ENCODE measurements at regions of chr1 and their contacts with region 1.

Region 1: GRCh38 chr1:114757455-114758250 is at the start of gene CSDE1:
- DNase-seq: peak; percentile 93
- ATAC-seq: peak; percentile 91
- H3K4me3 ChIP-seq: peak within 1 kb of the TSS; percentile 96
- H3K27ac ChIP-seq: peak within 1 kb of the TSS; percentile 99
- H3K4me1 ChIP-seq: peaks cover 15% of the 10 kb centered on the region; the same call in 1 of the 2 replicates
- H3K27me3 ChIP-seq: no peaks in the 10 kb centered on the region
- CTCF ChIP-seq: peak; percentile 10 to 38 (median 28); a peak in 2 of 6 replicates
- EP300 ChIP-seq: peak in 1 of 2 experiments; percentile 11; a peak in 1 of 4 replicates
- POLR2A ChIP-seq: peak; percentile 98
- RAD21 ChIP-seq: peak; percentile 42
- polyA plus RNA-seq, gene CSDE1: 130 to 143 TPM

Region 2: DNA sequence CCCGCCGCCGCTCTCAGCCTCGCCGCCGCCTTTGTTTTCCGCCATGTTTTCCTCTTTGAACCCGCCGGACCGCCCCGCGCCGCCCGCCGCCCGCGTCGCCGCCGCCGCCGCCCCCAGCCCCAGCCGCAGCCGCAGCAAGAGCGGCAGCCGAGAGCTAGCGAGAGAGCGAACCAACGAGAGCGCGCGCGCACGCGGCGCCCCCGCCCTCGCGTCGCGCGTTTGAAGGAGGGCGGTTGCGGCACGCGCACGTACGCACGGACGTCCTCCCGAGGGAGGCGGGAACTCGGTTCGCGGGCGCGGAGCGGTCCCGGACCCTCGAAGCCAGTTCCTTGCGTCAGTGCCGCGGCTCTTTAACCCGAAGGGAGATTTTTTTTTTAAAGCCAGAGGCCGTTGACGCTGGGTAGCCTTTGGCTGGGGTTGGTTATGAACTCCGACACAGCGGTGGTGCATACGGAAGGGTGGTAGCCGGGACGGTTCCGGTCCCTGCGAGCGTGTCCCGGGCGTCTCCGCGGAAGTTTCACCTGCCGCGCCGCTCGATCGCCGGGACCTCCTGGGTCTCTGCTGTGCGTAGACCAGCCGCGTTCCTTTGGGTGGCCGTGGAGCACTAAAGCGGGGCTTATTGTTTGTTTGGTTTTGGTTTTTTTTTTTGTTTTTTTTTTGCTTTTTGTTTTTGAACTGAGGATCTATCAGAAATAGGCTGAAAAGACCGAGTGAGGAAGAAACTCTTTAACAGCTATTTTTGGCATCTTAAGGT is 246.4 kb before region 1 on chr1 and contains the start of gene TRIM33:
- CTCF ChIA-PET with region 1: no interaction called
- POLR2A ChIA-PET with region 1: interaction called, 3 read pairs
- RAD21 ChIA-PET with region 1: no interaction called
- SMC1A ChIA-PET with region 1: no interaction called
- in situ Hi-C with region 1: no loop called
- intact Hi-C with region 1: loop called (anchors 5 kb)
- DNase-seq: peak; percentile 81
- ATAC-seq: peak; percentile 72
- H3K4me3 ChIP-seq: peak within 1 kb of the TSS; percentile 93
- H3K27ac ChIP-seq: peak within 1 kb of the TSS; percentile 94
- H3K4me1 ChIP-seq: peaks cover 7% of the 10 kb centered on the region; the same call in 1 of the 2 replicates
- H3K27me3 ChIP-seq: no peaks in the 10 kb centered on the region
- CTCF ChIP-seq: no peak
- EP300 ChIP-seq: no peak; a peak in 1 of 4 replicates
- POLR2A ChIP-seq: peak; percentile 85
- RAD21 ChIP-seq: no peak
- polyA plus RNA-seq, gene TRIM33: 9.0 to 10.6 TPM

Region 3: GRCh38 chr1:114716304-114717170 is 41.1 kb before region 1 on chr1 and contains the start of gene NRAS:
- CTCF ChIA-PET with region 1: interaction called, 4 read pairs
- POLR2A ChIA-PET with region 1: interaction called, 36 read pairs
- RAD21 ChIA-PET with region 1: interaction called, 3 read pairs
- SMC1A ChIA-PET with region 1: interaction called, 24 read pairs
- in situ Hi-C with region 1: no loop called
- intact Hi-C with region 1: loop called (anchors 2 kb)
- DNase-seq: peak; percentile 56
- ATAC-seq: peak; percentile 96
- H3K4me3 ChIP-seq: peak within 1 kb of the TSS; percentile 93
- H3K27ac ChIP-seq: peak within 1 kb of the TSS; percentile 98
- H3K4me1 ChIP-seq: no peaks in the 10 kb centered on the region
- H3K27me3 ChIP-seq: no peaks in the 10 kb centered on the region
- CTCF ChIP-seq: no peak
- EP300 ChIP-seq: peak in 1 of 2 experiments; percentile 30; a peak in 1 of 4 replicates
- POLR2A ChIP-seq: peak; percentile 85
- RAD21 ChIP-seq: no peak
- polyA plus RNA-seq, gene NRAS: 31.7 to 33.0 TPM

Region 4: DNA sequence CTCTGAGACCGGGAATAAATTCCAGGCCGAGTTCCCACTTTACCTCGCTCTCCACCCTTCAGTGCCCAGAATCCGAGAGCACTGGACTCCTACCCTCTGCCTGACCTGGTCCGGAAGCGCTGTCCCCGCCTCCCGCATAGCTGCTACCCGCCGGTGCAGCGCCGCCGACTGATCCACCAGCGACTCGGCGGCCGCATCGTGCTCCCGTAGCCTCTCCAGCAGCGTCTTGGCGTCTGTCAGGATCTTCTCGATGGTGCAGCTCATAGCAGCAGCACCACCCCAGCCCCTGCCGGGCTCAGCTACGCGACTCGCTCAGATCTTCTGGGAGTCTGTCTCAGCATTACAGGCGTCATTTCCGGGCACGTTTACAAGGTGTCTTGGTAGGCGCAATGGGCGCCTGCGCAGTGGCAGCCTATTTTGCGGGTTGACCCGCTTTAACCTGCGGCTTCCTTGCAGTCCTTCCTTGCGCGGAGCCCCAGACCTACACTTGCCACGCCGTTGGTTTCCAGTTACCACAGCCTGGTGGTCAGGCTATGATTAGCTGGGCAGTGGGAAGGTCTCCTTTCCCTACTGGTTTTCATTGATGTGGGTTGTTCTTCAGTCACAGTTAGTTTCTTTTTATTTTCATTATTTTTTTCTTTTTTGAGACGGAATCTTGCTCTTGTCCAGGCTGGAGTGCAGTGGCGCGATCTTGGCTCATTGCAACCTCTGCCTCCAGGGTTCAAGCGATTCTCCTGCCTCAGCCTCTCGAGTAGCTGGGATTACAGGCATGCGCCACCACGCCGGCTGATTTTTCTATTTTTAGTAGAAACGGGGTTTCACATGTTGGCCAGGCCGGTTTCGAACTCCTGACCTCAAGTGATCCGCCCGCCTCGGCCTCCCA is 22.9 kb after region 1 on chr1 and contains the start of gene SIKE1:
- CTCF ChIA-PET with region 1: interaction called, 3 read pairs
- POLR2A ChIA-PET with region 1: interaction called, 7 read pairs
- RAD21 ChIA-PET with region 1: interaction called, 4 read pairs
- SMC1A ChIA-PET with region 1: interaction called, 3 read pairs
- in situ Hi-C with region 1: no loop called
- intact Hi-C with region 1: loop called (anchors 1 kb)
- DNase-seq: peak; percentile 80
- ATAC-seq: peak; percentile 100
- H3K4me3 ChIP-seq: peak within 1 kb of the TSS; percentile 87
- H3K27ac ChIP-seq: peak within 1 kb of the TSS; percentile 91
- H3K4me1 ChIP-seq: no peaks in the 10 kb centered on the region; the same call in 1 of the 2 replicates
- H3K27me3 ChIP-seq: no peaks in the 10 kb centered on the region
- CTCF ChIP-seq: peak in 1 of 3 experiments; percentile 12; a peak in 1 of 6 replicates
- EP300 ChIP-seq: no peak
- POLR2A ChIP-seq: peak; percentile 99
- RAD21 ChIP-seq: no peak
- polyA plus RNA-seq, gene SIKE1: 10.4 to 12.8 TPM